ENCODE measurements at regions of chr14 and their contacts with region 1.

Region 1: GRCh38 chr14:77457522-77458290 is at the starts of genes AHSA1 and VIPAS39:
- DNase-seq: peak; percentile 94
- ATAC-seq: peak; percentile 93
- H3K4me3 Mint-ChIP-seq: peak within 1 kb of the TSS; percentile 100
- H3K27ac Mint-ChIP-seq: peak within 1 kb of the TSS; percentile 100
- H3K4me1 Mint-ChIP-seq: peaks cover 24% of the 10 kb centered on the region
- H3K27me3 Mint-ChIP-seq: no peaks in the 10 kb centered on the region
- CTCF ChIP-seq: no peak
- total RNA-seq, gene AHSA1: 137 to 186 TPM (median 160 TPM) in 3 replicates
- total RNA-seq, gene VIPAS39: 17.0 to 18.5 TPM (median 17.9 TPM) in 3 replicates

Region 2: GRCh38 chr14:77320238-77320935 is 137.3 kb before region 1 on chr14 and contains the start of gene POMT2:
- CTCF ChIA-PET with region 1: interaction called, 12 read pairs
- POLR2A ChIA-PET with region 1: interaction called, 7 read pairs
- DNase-seq: peak; percentile 98
- ATAC-seq: peak; percentile 64
- H3K4me3 Mint-ChIP-seq: peak within 1 kb of the TSS; percentile 96
- H3K27ac Mint-ChIP-seq: peak within 1 kb of the TSS; percentile 100
- H3K4me1 Mint-ChIP-seq: peaks cover 46% of the 10 kb centered on the region
- H3K27me3 Mint-ChIP-seq: no peaks in the 10 kb centered on the region; the same call in 1 of the 2 replicates
- CTCF ChIP-seq: no peak
- total RNA-seq, gene POMT2: 31.3 to 38.7 TPM (median 35.2 TPM) in 3 replicates

Region 3: DNA sequence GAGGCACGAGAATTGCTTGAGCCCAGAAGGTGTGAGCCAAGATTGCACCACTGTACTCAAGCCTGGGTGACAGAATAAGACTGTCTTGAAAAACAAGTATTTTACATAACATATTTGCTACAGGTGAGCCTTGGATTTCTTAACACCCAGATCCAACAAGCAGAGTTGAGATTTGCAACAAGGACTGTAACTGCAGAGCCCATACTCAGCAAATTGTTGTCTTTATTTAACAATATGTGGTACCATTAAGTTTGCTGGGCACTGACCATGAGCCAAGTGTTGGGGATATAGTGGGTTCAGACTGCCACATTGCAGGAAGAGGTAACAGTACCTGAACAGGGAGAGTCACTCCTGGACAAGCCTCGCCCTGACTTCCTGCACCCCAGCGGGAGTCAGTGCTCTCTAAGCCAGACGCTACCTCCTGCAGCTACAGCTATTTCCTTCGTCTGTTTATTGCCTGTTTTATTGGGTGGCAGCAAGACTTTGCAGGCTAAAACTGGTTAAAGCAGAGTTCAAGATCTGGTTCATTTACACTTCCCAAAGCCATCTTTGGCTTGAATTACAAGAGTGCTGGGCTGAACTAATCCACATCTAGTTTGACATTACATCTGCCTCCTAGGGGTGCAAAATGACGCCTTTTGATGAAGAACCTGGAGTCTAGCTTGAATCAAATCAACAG is 12.6 kb after region 1 on chr14:
- CTCF ChIA-PET with region 1: interaction called, 18 read pairs
- POLR2A ChIA-PET with region 1: interaction called, 3 read pairs
- DNase-seq: no peak
- ATAC-seq: peak; percentile 52
- H3K4me3 Mint-ChIP-seq: no peak overlapping the region
- H3K27ac Mint-ChIP-seq: peak overlapping the region; percentile 62
- H3K4me1 Mint-ChIP-seq: peaks cover 31% of the 10 kb centered on the region
- H3K27me3 Mint-ChIP-seq: no peaks in the 10 kb centered on the region
- CTCF ChIP-seq: no peak

Region 4: GRCh38 chr14:77478796-77479195 is 21.1 kb after region 1 on chr14:
- CTCF ChIA-PET with region 1: interaction called, 13 read pairs
- POLR2A ChIA-PET with region 1: interaction called, 3 read pairs
- DNase-seq: no peak
- ATAC-seq: no peak
- H3K4me3 Mint-ChIP-seq: no peak overlapping the region
- H3K27ac Mint-ChIP-seq: no peak overlapping the region
- H3K4me1 Mint-ChIP-seq: peaks cover 7% of the 10 kb centered on the region; the same call in 1 of the 2 replicates
- H3K27me3 Mint-ChIP-seq: no peaks in the 10 kb centered on the region
- CTCF ChIP-seq: no peak

Region 5: DNA sequence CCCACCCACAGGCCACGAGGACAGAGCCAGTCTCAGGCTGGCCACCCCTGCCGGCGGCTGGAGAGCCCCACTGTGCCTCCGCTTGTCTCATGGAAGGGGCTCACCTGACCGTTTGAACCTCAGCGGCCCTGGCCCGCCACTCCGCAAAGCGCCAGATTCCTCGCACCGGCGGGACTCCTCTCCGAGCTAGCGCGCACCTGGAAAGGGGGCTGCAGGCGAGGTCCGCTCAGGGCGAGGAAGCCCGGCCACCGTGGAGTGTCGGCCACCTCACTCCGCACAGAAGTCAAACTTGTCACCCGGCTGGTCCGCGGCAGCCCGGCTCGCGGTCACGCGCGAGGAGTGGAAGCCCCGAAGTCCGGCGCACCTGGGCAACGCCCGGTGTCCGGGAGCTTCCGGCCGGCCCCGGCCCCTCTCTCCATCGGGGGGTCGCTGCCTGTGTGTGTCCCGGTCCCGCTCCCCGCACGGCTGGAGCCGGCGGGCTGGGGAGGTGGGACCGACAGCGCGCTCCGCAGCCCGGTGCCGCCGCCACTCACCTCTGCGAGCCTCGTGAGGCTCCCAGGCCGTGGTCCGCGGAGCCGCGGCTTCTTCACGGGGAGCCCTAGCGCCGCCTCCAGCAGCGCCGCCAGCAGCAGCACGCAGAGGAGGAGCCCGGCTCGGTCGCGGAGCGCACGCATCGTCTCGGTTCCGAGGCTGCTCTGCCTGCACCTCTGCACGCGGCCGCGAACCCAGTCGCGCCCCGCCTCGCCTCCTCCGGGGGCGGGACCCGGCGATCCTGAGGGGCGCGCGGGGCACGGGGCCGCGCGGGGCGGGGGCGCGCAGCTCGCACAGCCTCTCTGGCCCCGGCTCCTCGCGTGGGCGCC is 40.6 kb after region 1 on chr14 and contains the start of gene ISM2:
- CTCF ChIA-PET with region 1: interaction called, 14 read pairs
- POLR2A ChIA-PET with region 1: no interaction called
- DNase-seq: peak; percentile 63
- ATAC-seq: peak; percentile 78
- H3K4me3 Mint-ChIP-seq: peak within 1 kb of the TSS; percentile 69
- H3K27ac Mint-ChIP-seq: no peak within 1 kb of the TSS
- H3K4me1 Mint-ChIP-seq: 0 out of 2 replicates have a peak, but pooled peaks cover 7% of the 10 kb centered on the region
- H3K27me3 Mint-ChIP-seq: peaks cover 60% of the 10 kb centered on the region
- CTCF ChIP-seq: no peak
- total RNA-seq, gene ISM2: 0.80 to 1.4 TPM (median 1.3 TPM) in 3 replicates